ENCODE measurements at regions of chr9 and their contacts with region 1.

Region 1: DNA sequence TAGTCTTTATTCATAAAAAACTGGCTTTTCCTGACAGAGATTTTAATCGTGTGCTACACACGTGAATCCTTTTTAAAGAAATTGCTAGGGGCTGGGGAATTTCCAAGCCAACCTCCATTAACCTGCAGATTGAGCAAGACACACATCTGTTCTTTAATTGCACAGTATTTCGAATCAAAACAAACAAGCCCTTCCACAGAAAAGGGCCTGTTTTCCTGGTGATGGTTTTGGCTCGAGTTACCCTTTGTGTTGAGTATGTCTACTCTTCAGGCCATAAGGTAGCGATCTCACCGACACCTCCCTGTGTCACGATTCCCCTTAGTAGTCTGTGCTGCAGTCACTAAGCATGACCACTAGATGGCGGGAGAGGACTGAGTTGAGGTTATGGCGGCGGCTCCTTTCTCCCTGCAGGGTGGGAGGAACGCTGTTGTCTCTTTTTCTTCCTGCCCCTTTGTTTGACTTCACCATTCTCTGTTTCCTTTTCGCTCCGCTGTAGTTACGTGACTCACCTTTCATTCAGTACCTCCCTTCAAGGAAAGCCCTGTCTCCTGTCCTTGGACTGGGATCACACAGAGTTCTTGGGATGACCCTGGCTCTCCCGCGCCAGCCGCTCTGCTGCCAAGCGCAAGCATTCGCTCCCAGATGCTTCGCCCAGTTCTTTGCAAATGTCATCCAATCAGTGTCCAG is 137.1 kb upstream of the SLC24A2 start:
- DNase-seq: peak; percentile 77
- H3K4me3 ChIP-seq: peak overlapping the region; percentile 47 to 56
- H3K27ac ChIP-seq: no peak overlapping the region
- H3K4me1 ChIP-seq: peaks cover 0 to 6% of the 10 kb centered on the region in 2 experiments; a peak in 2 of 4 replicates
- H3K27me3 ChIP-seq: no peaks in the 10 kb centered on the region; the same call in 1 of the 2 replicates
- CTCF ChIP-seq: peak; percentile 97
- EP300 ChIP-seq: no peak
- RAD21 ChIP-seq: peak; percentile 97

Region 2: DNA sequence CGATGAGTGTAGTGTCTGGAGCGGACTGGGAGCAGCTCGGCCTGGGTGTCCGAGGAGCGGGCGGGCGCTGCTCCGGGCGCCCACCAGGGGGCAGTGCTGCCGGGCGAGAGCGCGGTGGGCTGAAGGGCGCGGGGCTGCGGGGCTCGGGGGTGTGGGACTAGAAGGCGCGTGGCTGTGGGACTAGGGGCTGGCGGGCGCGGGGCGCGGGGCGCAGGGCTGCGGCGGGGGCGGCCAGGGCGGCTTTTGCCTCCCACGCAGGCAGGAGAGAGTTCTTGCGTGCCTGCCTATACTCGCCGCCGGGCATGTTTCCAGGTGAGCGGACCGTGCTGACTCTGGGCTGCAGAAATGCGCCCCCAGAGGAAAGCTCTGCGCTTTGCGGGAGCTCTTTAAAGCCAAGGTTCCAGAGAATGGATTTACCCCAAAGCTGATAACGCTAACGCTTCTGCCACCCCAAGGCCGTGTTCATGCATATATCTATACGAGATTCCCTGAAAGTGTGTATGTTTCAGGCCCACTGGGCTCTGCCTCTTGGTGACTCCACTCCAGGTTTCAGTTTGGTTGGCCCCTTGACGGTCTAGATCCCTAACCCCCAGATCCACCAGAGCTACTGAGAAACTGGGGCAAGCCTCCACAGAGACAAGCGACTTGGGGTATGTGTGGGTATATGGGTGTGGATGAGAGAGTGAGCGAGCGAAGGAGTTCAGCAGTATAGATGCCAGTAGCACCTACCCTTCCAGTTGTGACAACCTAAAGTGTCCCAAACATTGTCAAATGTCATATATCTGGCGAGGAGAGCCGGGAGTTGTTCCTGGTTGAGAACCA is 461.0 kb before region 1 on chr9:
- CTCF ChIA-PET with region 1: interaction called, 37 read pairs
- POLR2A ChIA-PET with region 1: no interaction called
- DNase-seq: peak; percentile 94
- H3K4me3 ChIP-seq: peak overlapping the region; percentile 46 to 70
- H3K27ac ChIP-seq: no peak overlapping the region
- H3K4me1 ChIP-seq: peaks cover 0 to 5% of the 10 kb centered on the region in 2 experiments; a peak in 1 of 4 replicates
- H3K27me3 ChIP-seq: no peaks in the 10 kb centered on the region
- CTCF ChIP-seq: peak; percentile 89
- EP300 ChIP-seq: no peak
- RAD21 ChIP-seq: peak; percentile 29; the same call in 1 of the 2 replicates

Region 3: GRCh38 chr9:19471737-19472648 is 454.0 kb before region 1 on chr9:
- CTCF ChIA-PET with region 1: interaction called, 27 read pairs
- POLR2A ChIA-PET with region 1: interaction called, 3 read pairs
- DNase-seq: peak; percentile 80
- H3K4me3 ChIP-seq: peak overlapping the region; percentile 13 to 58
- H3K27ac ChIP-seq: no peak overlapping the region
- H3K4me1 ChIP-seq: peaks cover 0 to 10% of the 10 kb centered on the region in 2 experiments; a peak in 2 of 4 replicates
- H3K27me3 ChIP-seq: peaks cover 4% of the 10 kb centered on the region; the same call in 1 of the 2 replicates
- CTCF ChIP-seq: peak; percentile 81
- EP300 ChIP-seq: no peak
- RAD21 ChIP-seq: peak; percentile 82

Region 4: GRCh38 chr9:19493174-19493811 is 432.7 kb before region 1 on chr9:
- CTCF ChIA-PET with region 1: interaction called, 17 read pairs
- POLR2A ChIA-PET with region 1: no interaction called
- DNase-seq: peak; percentile 73
- H3K4me3 ChIP-seq: peak overlapping the region; percentile 45 to 67
- H3K27ac ChIP-seq: no peak overlapping the region
- H3K4me1 ChIP-seq: peaks cover 0 to 10% of the 10 kb centered on the region in 2 experiments; a peak in 2 of 4 replicates
- H3K27me3 ChIP-seq: no peaks in the 10 kb centered on the region
- CTCF ChIP-seq: peak; percentile 83
- EP300 ChIP-seq: no peak
- RAD21 ChIP-seq: peak; percentile 86

Region 5: DNA sequence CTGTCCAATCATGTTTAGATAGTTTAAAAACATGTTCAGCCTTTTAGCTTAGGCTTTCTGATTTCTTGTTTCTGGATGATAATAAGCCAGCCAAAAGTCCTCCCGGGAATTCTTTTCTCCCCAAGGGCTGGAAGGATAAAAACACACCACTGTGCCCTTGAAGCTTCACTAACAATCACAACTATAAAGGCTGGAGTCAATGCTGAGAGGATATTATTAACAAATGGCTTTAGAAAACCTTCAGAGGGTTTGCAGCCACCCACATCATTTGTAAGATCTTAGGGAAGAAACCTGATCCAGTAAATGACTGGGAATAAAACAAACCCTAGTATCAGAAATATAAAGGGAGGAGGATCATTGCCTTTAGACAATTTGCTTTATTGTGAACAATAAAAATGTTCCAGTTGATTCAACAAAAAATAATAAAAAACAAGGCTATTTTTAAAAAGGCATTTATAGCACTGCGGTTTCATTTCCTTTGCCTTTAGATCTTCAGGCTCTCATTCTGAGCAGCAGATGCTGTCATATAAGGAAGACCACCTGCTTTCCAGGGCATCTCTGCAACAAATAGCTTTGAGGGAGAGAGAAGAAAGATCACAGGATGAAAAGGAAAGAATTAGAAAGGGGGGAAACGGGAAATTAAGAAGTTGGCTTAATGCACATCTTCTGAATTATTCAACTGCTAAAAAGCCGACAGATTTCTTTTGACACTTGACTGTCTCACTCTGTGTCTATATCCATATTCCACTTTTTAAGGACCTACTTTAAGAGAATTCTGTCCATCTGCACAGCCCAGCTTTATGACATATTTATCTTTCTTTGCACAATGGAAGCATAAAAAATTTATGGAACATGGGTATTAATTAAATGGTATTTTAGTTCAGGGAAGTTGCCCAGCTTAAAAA is 140.1 kb after region 1 on chr9:
- CTCF ChIA-PET with region 1: no interaction called
- POLR2A ChIA-PET with region 1: no interaction called
- DNase-seq: no peak
- H3K4me3 ChIP-seq: no peak overlapping the region
- H3K27ac ChIP-seq: no peak overlapping the region
- H3K4me1 ChIP-seq: no peaks in the 10 kb centered on the region
- H3K27me3 ChIP-seq: no peaks in the 10 kb centered on the region
- CTCF ChIP-seq: no peak
- EP300 ChIP-seq: no peak
- RAD21 ChIP-seq: no peak

Region 6: GRCh38 chr9:20622330-20623020 is 696.5 kb after region 1 on chr9 and contains the start of gene MLLT3:
- CTCF ChIA-PET with region 1: interaction called, 10 read pairs
- POLR2A ChIA-PET with region 1: no interaction called
- DNase-seq: peak; percentile 96
- H3K4me3 ChIP-seq: peak within 1 kb of the TSS; percentile 81 to 100
- H3K27ac ChIP-seq: peak within 1 kb of the TSS; percentile 79 to 90
- H3K4me1 ChIP-seq: peaks cover 6 to 8% of the 10 kb centered on the region in 2 experiments; a peak in 3 of 4 replicates
- H3K27me3 ChIP-seq: no peaks in the 10 kb centered on the region
- CTCF ChIP-seq: no peak
- EP300 ChIP-seq: no peak
- RAD21 ChIP-seq: 0 out of 2 replicates have a peak, but pooled peaks have one; percentile 4
- polyA plus RNA-seq, gene MLLT3: 3.9 and 6.2 TPM in 2 replicates

Region 7: GRCh38 chr9:20941174-20941690 is 1015.3 kb after region 1 on chr9:
- CTCF ChIA-PET with region 1: interaction called, 18 read pairs
- POLR2A ChIA-PET with region 1: no interaction called
- DNase-seq: peak; percentile 63
- H3K4me3 ChIP-seq: peak overlapping the region in 1 of 2 experiments; percentile 27; a peak in 1 of 4 replicates
- H3K27ac ChIP-seq: no peak overlapping the region
- H3K4me1 ChIP-seq: no peaks in the 10 kb centered on the region
- H3K27me3 ChIP-seq: no peaks in the 10 kb centered on the region
- CTCF ChIP-seq: peak; percentile 93
- EP300 ChIP-seq: no peak
- RAD21 ChIP-seq: peak; percentile 97

Region 8: DNA sequence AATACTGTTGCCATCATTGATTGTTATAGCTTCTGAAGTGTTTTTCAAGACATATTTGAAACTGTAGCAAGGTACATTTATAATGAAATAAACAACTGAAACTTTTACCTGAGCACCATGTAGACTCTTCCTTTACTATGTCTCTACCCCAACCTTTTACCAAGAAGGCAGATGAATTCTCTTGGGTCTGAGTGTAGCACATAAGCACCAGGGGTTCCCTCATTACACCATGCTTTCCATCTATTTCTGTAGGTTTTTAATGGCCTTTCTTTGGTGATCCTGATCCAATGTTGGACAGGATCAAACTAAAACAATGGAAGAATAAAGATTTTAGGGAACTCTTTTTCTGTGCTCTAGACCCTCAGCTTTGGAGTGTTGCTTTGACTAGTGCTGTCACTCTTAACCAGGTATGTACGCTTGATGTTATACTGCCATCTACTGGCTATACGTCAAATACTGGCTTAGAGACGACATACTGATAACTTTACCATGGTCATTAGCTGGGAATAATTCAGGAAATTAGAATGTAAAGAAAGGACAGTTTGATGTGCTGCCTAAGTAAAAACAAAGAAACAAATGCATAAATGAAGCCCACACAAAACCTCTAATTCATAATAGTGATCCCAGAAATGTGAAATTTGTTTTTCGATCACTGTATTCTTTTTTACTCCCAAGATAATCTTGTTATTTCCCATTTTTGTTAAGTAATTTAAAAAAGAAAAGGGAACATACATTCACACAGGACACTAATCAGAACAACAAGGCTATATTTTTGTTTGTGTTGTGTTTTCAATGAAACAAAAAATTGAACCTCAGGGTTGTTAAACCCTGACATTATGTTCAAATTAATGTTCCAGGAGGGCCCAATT is 1185.0 kb after region 1 on chr9:
- CTCF ChIA-PET with region 1: interaction called, 18 read pairs
- POLR2A ChIA-PET with region 1: no interaction called
- DNase-seq: peak; percentile 58
- H3K4me3 ChIP-seq: no peak overlapping the region
- H3K27ac ChIP-seq: no peak overlapping the region
- H3K4me1 ChIP-seq: no peaks in the 10 kb centered on the region
- H3K27me3 ChIP-seq: no peaks in the 10 kb centered on the region
- CTCF ChIP-seq: peak; percentile 91
- EP300 ChIP-seq: no peak
- RAD21 ChIP-seq: peak; percentile 96